HEK293T (cell line): ENCODE measurements at regions of chr12 and their contacts with region 1.

Region 1: DNA sequence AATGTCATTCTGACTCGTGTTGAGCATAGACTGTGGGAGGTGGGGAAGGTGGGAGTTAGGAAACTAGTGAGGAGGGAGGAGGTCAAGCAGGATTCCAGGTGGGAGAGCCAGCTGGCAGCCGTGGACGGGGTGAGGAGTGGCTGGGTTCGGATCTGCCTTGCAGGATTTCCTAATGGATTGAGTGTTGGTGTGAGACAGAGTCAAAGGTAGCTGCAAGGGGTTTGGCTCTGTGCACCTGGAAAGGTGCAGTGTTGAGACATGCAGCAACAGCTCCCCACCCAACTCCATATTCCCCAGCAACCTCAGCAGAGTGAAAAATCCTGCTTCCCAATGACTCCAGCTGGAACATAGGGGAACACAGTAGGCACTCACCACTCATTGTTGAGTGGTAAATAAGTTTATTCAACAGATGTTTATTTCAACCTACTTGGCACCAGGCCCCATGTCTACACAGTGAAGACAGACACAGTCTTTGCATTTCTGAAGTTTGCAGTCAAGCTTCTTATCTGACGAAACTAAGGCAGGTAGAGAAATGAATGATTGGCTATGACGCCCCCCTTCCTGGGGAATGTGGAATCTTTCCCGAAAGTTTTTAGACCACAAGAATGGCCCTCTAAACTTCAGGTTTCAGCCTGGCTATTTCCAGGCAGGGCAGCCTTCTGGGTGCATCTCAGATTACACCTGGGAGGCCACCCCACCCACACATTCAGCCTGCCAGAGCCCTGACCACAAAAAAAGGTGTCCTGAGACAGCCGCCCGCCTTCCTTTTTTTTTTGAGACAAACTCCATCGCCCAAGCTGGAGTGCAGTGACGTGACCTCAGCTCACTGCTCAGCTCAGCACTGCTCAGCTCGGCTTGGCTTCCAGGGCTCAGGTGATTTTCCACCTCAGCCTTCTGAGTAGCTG is 37.9 kb upstream of the PLEKHG6 start:
- DNase-seq: no peak

Region 2: GRCh38 chr12:6154730-6155459 is 117.7 kb before region 1 on chr12:
- CTCF ChIA-PET with region 1: no interaction called
- POLR2A ChIA-PET with region 1: no interaction called
- DNase-seq: no peak

Region 3: GRCh38 chr12:6285063-6285477 is 12.5 kb after region 1 on chr12:
- CTCF ChIA-PET with region 1: interaction called, 11 read pairs
- POLR2A ChIA-PET with region 1: no interaction called
- DNase-seq: peak; percentile 86